AG04450 (cell line): ENCODE measurements at regions of chrX and their contacts with region 1.

Region 1: GRCh38 chrX:152958524-152959465 is 35.1 kb downstream of the PNMA5 start:
- DNase-seq: peak; percentile 67
- H3K4me3 ChIP-seq: no peak overlapping the region
- H3K27ac ChIP-seq: peak overlapping the region; percentile 21
- H3K27me3 ChIP-seq: no peaks in the 10 kb centered on the region
- CTCF ChIP-seq: peak; percentile 68

Region 2: DNA sequence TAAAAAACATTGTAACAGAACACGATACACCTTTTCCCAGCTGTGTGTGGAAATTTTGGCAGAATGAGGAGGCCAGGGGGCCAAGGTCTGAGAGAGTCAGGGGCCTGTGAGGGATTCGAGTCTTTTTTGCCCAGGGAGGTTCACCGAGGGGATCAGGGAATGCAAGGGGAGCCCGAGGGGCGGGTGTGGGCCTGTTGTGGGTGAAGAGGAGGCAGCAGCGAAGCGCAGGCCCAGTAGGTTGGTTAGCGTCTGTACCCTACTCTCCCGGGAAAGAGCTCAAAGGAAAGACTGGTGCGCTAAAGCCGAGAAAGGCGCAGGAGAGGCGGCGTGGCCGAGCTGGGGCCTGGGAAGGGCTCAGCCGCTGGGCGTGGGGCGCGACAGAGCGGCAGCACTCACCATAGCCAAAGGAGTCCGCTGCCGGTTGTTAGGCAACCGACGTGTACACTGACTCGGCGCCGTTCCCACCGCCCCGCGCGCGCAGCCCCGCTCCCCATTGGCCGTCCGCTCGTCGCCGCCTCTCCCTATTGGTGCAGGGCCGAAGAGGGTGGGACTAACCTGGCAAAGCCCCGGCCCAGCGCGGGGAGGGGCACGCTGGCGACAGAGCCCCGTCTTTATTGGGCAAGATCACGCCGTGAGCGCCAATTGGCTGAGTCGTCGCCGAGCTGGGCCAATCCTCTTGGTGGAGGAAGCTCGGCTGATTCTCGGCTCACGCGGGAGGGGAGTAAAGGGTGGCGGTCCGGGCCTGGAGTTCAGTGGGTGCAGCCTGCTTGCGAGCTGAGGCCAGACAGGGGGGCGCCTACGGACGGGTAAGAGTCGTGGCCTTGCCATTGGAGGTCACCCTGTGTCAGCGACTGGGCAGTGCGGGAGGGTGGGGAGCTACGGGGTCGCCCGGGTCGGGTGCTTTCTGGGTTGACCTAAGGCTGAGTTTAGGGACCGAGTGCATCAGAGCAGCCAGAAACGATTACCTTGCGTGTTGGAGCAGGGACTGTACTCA is 128.2 kb before region 1 on chrX and contains the starts of genes CETN2 and NSDHL:
- CTCF ChIA-PET with region 1: interaction called, 13 read pairs
- POLR2A ChIA-PET with region 1: no interaction called
- DNase-seq: peak; percentile 88
- H3K4me3 ChIP-seq: peak within 1 kb of the TSS; percentile 72
- H3K27ac ChIP-seq: no peak within 1 kb of the TSS
- H3K27me3 ChIP-seq: no peaks in the 10 kb centered on the region
- CTCF ChIP-seq: no peak
- polyA plus RNA-seq, gene CETN2: 53.8 and 70.9 TPM in 2 replicates
- polyA plus RNA-seq, gene NSDHL: 19.6 and 21.0 TPM in 2 replicates

Region 3: GRCh38 chrX:152941328-152942106 is 17.3 kb before region 1 on chrX:
- CTCF ChIA-PET with region 1: interaction called, 19 read pairs
- POLR2A ChIA-PET with region 1: no interaction called
- DNase-seq: peak; percentile 77
- H3K4me3 ChIP-seq: peak overlapping the region; percentile 72
- H3K27ac ChIP-seq: peak overlapping the region; percentile 21
- H3K27me3 ChIP-seq: no peaks in the 10 kb centered on the region
- CTCF ChIP-seq: peak; percentile 59

Region 4: GRCh38 chrX:153620576-153620975 is 661.8 kb after region 1 on chrX:
- CTCF ChIA-PET with region 1: interaction called, 11 read pairs
- POLR2A ChIA-PET with region 1: no interaction called
- DNase-seq: no peak
- H3K4me3 ChIP-seq: no peak overlapping the region
- H3K27ac ChIP-seq: no peak overlapping the region
- H3K27me3 ChIP-seq: peaks cover 16% of the 10 kb centered on the region
- CTCF ChIP-seq: no peak